Caco-2 (cell line): ENCODE measurements at regions of chr5 and their contacts with region 1.

Region 1: GRCh38 chr5:140351609-140352334 is 5.4 kb upstream of the HBEGF start:
- DNase-seq: peak; percentile 62 to 86
- H3K4me3 ChIP-seq: no peak overlapping the region
- H3K4me3 Mint-ChIP-seq: no peak overlapping the region
- H3K27ac Mint-ChIP-seq: no peak overlapping the region
- H3K4me1 ChIP-seq: peaks cover 36% of the 10 kb centered on the region
- H3K4me1 Mint-ChIP-seq: peaks cover 30% of the 10 kb centered on the region
- H3K27me3 ChIP-seq: no peaks in the 10 kb centered on the region
- H3K27me3 Mint-ChIP-seq: no peaks in the 10 kb centered on the region
- CTCF ChIP-seq: peak; percentile 78 to 87

Region 2: GRCh38 chr5:140174465-140175366 is 177.1 kb before region 1 on chr5 and contains the start of gene CYSTM1:
- CTCF ChIA-PET with region 1: interaction called, 7 read pairs
- POLR2A ChIA-PET with region 1: interaction called, 9 read pairs
- intact Hi-C with region 1: loop called (anchors 2 kb)
- DNase-seq: peak; percentile 96 to 99
- H3K4me3 ChIP-seq: peak within 1 kb of the TSS; percentile 74
- H3K4me3 Mint-ChIP-seq: peak within 1 kb of the TSS; percentile 99
- H3K27ac Mint-ChIP-seq: peak within 1 kb of the TSS; percentile 100
- H3K4me1 ChIP-seq: peaks cover 5% of the 10 kb centered on the region; the same call in 1 of the 2 replicates
- H3K4me1 Mint-ChIP-seq: peaks cover 11% of the 10 kb centered on the region
- H3K27me3 ChIP-seq: no peaks in the 10 kb centered on the region
- H3K27me3 Mint-ChIP-seq: no peaks in the 10 kb centered on the region
- CTCF ChIP-seq: no peak
- total RNA-seq, gene CYSTM1: 93.5 and 102 TPM in 2 replicates